Posterior cingulate gyrus (tissue), 11 donors: ENCODE measurements at regions of chr15 and their contacts with region 1.

Region 1: DNA sequence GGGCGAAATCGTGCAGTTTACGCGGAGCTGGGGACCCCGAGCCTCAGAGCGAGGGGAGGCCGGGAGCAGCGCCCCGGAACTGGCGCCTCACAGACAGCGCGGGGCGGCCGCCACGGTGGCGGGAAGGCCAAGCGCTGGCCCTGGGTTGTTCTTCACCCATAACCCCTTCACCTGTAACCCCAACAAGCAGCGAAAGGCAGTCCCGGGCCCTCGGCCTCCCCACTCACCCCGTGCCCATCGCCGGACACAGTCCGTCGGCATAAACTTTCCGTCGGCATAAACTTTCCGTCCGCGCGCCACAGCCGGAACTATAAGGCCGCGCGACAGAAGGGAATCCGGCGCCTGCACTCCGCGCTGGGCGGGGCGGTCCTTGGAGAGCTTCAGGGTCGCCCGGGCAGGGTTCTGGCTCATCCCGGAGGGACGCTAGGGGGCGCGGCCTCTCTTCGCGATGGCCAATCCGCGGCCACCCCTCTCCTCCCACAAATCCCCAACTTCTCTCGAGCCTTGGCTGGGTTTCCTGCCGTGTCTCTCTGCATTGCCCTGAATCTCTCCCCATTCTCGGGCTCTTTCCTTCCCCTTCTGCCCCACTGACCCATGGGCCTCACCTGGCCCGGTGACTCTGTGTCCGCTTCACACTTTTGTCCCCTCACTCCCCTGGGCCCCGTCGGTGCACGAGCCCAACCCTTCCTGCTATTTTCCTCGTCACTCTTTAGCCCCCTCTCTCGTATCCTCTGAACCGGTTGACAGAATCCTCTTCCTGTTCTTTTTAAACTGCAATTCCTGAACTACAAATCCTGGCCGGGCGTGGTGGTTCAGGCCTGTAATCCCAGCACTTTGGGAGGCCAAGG is at the start of gene INTS14:
- DNase-seq: peak; percentile 95 to 99 (median 98)

Region 2: DNA sequence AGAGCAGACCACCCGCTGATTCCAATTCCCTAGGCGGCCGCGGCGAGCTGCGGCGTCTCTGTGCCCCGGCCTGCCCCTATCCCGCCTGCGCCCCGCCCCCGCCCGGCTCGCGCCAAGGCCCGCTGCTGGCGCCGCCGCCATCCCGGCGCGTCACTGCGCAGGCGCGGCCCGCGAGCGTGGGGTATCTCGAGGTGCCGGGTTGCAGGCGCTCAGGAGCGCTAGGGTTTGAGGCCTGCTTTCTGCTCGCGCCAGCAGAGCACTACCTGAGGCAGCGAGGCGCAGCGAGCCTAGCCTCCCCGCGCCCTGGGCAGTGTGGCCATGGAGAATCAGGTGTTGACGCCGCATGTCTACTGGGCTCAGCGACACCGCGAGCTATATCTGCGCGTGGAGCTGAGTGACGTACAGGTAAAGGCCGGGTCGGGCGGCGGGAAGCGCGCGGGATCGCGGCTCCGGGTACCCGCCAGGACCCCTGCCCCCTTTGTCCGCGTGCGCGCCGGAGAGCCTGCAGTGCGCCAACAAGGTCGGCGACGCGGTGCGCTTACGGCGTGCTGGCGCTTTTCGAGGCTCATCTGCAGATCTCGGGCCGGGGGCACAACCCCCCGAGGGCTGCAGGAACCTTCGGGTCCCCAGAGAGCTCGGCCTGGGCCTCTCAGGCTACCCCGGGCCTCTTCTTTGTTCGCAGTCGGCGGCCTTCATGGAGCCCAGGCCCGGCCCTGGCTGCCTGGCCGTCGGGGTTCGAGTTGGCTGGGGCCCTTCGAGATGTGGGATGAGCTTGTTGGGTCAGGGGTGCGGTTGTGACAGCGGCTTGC is 80.6 kb before region 1 on chr15 and contains the start of gene HACD3:
- intact Hi-C with region 1: loop called (anchors 10 kb)
- DNase-seq: peak; percentile 78 to 98 (median 84)

Region 3: DNA sequence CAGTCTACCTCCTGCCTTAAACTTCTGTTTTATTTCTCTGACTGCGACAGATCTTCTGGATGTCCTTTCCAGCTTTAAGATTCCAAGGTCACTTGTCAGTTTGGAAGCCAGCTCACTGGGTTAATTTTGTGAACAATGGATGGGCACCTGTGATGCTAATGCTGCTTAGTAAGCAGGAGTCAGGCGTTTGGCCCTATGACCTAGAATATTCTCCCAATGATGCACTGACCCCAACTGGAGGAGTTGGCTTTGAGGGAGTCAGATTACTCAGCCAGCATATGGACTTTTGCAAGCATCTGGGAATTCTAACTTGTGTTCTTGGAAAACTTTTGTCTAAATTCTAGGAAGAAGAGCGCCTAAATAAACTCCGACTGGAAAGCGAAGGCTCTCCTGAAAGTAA is 52.8 kb before region 1 on chr15:
- intact Hi-C with region 1: no loop called
- DNase-seq: no peak

Region 4: DNA sequence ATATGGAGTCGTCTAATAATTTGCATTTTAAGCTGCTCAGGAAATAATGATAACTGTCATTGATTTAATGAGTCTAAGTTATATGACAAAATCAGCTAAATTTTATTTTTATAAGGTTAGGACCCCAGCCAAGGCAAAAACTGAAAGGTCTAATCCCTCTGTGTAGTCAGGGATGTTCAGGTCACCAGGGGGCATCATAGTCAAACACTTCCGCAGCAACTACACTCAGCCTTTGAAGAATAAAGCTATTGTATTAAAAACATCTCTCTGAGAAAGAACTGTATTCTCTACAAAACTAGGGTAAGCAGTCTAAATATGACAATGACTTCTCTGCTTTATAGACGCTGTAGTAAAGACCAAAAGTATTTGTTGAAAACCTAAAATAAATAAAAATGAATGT is 15.1 kb before region 1 on chr15:
- intact Hi-C with region 1: no loop called
- DNase-seq: peak in 4 of 10 donors; percentile 38 to 82 (median 60)

Region 5: DNA sequence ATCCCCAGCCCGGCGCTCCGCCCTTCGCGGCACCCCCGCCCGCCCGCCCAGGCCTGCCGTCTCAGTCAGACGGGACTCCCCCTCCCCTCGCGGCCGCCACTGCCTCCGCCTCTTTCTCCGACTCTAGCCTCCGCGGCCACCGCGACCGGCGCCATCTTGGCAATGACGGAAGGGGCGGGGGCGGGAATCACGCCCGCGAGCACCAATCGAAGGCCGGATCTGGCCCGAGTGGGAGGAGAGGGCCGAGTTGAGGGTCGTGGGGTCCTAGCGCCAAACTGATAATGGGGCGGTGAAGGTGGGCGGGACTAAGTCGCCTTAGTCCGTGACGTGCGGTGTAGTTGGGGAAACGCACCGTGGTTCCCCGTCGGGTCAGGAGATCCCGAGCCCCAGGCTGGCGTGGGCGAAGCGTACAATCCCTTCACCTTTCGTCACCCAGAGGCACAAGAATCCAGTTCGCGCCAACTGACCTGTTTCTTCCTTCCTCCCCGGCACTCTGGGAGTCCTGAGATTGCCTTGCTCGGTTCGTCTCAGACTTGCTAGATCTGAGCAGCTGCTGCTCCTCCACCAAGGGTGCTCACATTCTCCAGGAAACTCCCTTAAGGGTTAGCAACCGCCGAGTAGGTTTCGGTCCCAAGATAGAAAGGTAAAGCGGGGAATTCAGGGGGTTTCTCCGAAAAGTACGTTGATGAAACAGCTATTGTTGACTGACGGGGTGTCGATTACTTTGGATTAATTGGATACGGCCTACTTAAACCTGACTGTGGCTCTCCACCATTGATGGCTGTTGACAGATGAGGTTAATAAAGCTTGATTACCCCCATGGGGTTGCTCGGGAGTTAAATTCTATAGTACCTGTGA is 181.3 kb after region 1 on chr15 and contains the start of gene DENND4A:
- intact Hi-C with region 1: loop called (anchors 2 kb)
- DNase-seq: peak; percentile 96 to 100 (median 98)

Region 6: DNA sequence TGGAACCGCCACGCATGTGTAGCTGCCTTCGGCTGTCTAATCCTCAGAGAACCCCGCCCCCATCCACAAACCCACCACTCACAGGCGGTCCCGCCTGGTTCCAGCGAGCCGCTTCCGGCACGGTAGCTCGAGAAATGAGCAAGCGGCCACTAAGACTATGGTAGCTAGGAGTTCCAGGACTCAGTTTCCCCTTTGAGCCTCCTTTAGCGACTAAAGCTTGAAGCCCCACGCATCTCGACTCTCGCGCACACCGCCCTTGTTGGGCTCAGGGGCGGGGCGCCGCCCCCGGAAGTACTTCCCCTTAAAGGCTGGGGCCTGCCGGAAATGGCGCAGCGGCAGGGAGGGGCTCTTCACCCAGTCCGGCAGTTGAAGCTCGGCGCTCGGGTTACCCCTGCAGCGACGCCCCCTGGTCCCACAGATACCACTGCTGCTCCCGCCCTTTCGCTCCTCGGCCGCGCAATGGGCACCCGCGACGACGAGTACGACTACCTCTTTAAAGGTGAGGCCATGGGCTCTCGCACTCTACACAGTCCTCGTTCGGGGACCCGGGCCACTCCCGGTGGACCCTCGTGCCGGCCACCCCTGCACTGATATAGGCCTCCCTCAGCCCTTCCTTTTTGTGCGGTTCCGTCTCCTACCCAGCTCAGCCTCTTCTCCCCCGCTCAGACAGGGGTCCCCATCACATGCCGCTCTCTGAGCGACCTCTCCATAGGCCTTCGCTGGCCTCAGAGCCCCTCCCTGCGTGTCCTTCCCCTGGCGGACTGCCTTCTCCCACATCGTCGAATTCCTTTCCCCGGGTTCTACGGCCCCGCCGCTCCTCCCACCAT is 258.2 kb after region 1 on chr15 and contains the start of gene RAB11A:
- intact Hi-C with region 1: loop called (anchors 5 kb)
- DNase-seq: peak; percentile 90 to 100 (median 96)